Ovary (tissue), 10 donors: ENCODE measurements at regions of chr2 and their contacts with region 1.

Region 1: DNA sequence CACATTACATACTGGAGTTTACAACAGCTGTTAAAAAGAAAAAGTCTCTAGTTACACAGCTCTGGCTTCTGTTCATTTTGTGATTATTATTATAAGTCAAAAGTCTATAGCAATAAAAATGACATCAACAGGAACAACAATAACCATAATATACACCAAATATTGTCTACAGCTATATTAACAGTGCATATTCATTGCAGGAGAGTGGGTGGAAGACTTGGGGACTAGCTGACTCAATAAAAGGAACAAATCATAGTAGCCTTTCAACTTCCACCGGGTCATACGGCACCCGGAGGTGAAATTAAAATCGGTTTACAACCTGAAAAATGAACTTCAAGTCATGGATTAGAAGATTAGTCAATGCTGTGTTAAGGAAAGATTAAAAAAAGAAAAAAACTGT is 642.1 kb downstream of the SATB2 start:
- DNase-seq: no peak
- H3K4me3 ChIP-seq: no peak overlapping the region
- H3K27ac ChIP-seq: no peak overlapping the region
- H3K4me1 ChIP-seq: no peaks in the 10 kb centered on the region
- H3K27me3 ChIP-seq: no peaks in the 10 kb centered on the region
- CTCF ChIP-seq: no peak
- EP300 ChIP-seq: no peak
- POLR2A ChIP-seq: no peak

Region 2: GRCh38 chr2:198901892-198902291 is 86.3 kb after region 1 on chr2:
- intact Hi-C with region 1: no loop called
- DNase-seq: no peak
- H3K4me3 ChIP-seq: no peak overlapping the region
- H3K27ac ChIP-seq: no peak overlapping the region
- H3K4me1 ChIP-seq: no peaks in the 10 kb centered on the region
- H3K27me3 ChIP-seq: no peaks in the 10 kb centered on the region
- CTCF ChIP-seq: no peak
- EP300 ChIP-seq: no peak
- POLR2A ChIP-seq: no peak

Region 3: DNA sequence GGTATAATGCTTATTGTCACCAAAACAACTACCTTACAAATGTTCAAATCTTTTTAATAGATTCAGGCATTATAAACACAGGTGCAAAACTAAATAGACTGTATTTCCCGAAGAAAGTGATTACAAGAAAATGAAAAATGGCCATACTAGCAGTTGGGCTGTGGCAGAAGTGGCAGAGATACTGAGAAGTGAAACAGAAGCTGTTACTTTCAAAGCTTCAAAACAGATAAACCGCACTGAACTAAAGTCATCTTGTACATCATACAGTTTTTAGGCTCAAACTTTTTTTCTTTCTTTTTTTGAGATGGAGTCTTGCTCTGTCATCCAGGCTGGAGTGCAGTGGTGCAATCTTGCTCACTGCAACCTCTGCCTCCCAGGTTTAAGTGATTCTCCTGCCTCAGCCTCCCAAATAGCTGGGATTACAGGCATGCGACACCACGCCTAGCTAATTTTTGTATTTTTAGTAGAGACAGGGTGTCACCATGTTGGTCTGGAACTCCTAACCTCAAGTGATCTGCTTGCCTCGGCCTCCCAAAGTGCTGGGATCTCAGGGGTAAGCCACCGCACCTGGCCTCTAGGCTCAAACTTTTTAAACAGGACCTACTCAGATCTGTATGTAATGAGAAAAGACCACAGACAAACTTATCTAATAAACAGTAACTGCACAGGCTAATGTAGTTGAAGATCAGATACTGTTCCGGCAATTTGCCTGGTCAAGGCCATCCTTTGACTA is 720.0 kb after region 1 on chr2:
- intact Hi-C with region 1: loop called in 1 of 4 experiments (anchors 5 kb)
- DNase-seq: no peak
- H3K4me3 ChIP-seq: no peak overlapping the region
- H3K27ac ChIP-seq: no peak overlapping the region
- H3K4me1 ChIP-seq: no peaks in the 10 kb centered on the region
- H3K27me3 ChIP-seq: no peaks in the 10 kb centered on the region
- CTCF ChIP-seq: no peak
- EP300 ChIP-seq: no peak
- POLR2A ChIP-seq: no peak